ENCODE measurements at regions of chr1 and their contacts with region 1.

Region 1: GRCh38 chr1:209375671-209376365 is 207.7 kb upstream of the CAMK1G start:
- DNase-seq: no peak
- H3K4me3 ChIP-seq: no peak overlapping the region
- CTCF ChIP-seq: no peak

Region 2: DNA sequence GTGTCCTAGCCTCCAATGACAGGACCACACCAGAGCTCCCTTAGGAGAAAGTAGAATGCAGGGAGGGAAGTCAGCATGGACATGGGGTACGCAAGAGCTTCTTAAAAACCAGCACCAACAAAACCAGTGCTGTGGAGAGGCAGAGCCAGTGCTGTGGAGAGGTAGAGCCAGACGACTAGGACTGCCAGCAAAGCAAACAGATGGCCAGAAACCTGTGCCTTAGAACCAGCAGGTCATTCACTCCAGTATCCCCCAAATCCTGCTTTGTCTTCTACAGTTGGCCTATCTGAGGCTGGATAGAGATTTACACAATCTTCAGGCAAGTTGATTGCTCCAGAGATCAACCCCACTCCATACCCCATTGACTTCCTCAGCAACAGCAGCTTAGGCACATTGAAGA is 252.2 kb before region 1 on chr1:
- CTCF ChIA-PET with region 1: no interaction called
- POLR2A ChIA-PET with region 1: no interaction called
- DNase-seq: no peak
- H3K4me3 ChIP-seq: no peak overlapping the region
- CTCF ChIP-seq: no peak

Region 3: GRCh38 chr1:209387969-209388329 is 12.1 kb after region 1 on chr1:
- CTCF ChIA-PET with region 1: interaction called, 27 read pairs
- POLR2A ChIA-PET with region 1: no interaction called
- DNase-seq: no peak
- H3K4me3 ChIP-seq: no peak overlapping the region
- CTCF ChIP-seq: no peak

Measured in AG04449 (cell line).